Aorta (tissue), 5 donors: ENCODE measurements at regions of chr1 and their contacts with region 1.

Region 1: GRCh38 chr1:156728597-156729462 is at the start of gene ISG20L2:
- DNase-seq: peak; percentile 98
- ATAC-seq: peak; percentile 97
- H3K4me3 ChIP-seq: peak within 1 kb of the TSS; percentile 83 to 89
- H3K27ac ChIP-seq: peak within 1 kb of the TSS; percentile 16 to 94
- H3K4me1 ChIP-seq: peaks cover 0 to 2% of the 10 kb centered on the region in 2 donors
- H3K27me3 ChIP-seq: no peaks in the 10 kb centered on the region
- total RNA-seq, gene ISG20L2: 20.6 to 26.9 TPM

Region 2: DNA sequence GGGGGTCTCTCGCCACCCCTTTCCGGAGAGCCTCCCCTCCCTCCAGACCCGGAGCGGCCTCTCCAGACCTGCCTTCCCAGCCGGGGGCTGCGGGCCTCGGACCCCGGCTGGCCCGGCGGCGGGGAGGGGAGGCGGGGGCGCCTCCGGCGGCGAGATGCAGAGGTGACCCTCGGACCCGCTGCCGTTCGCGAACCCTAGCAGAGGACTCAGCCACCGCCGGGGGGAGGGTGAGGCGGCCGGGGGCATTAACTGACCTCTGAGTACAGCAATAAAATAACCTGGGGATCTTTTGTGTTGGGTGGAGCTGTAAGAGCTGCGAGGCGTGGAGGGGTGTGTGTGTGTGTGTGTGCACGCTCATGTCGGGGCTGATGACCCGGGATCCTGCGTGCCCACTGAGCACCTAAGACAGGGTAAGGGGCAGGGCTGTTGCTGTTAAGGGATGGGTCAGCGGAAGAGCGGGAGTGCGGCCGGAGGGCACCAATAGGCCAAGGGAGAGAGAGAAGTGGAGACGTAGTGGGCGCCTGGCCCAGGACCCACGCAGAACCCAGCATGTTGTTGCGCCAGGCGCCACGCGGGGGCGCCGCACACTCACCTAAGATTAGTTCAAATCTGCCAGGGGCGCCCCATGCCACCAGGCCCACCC is 103.3 kb before region 1 on chr1:
- intact Hi-C with region 1: loop called in 1 of 2 experiments (anchors 2 kb)
- DNase-seq: peak; percentile 65 to 89
- ATAC-seq: peak; percentile 77
- H3K4me3 ChIP-seq: no peak overlapping the region
- H3K27ac ChIP-seq: no peak overlapping the region
- H3K4me1 ChIP-seq: no peaks in the 10 kb centered on the region
- H3K27me3 ChIP-seq: no peaks in the 10 kb centered on the region

Region 3: DNA sequence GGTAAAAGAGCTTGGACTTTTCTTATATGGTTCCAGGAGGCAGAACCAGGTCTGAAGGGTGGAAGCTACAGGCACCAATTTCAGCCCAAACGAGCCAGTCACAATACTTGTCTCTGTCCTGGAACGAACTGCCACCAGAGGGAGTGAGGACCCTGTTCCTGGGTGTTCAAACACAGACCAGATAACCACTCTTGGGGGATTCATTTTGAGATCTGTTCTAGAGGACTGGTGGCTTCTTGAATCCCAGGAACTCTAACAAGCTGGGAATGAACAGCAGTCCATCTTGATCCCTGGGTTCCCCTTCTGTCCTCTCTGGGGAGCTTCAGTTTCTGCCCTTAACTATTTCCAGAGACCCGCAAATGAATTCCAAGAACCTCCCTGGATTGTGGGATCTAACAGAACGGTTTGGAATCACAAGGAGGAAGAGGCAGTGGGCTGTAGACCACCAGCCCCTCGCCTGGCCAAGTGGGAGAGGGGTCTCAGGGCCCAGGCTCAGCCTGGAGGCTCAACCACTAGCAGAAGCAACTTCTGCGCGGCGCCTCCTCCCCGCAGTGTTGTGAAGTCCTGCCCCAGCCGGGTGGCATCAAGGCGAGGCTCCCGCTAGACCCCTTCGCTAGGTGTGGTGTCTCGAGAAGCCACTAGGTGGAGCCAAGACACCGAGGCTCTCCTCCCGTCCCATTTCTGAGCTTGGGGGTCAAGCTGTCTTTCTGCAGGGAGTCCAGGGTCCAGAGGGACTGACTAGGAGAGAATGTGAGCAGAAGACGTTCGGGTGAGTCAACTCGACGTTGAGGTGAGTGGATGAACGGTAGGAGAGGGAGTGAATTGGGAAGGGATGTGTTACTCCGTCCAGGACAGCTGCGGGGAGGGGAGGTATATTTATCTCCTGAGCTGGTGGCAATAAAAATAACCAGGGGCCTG is 39.5 kb before region 1 on chr1:
- intact Hi-C with region 1: loop called (anchors 1 to 2 kb)
- DNase-seq: peak; percentile 86 to 91
- ATAC-seq: peak; percentile 93
- H3K4me3 ChIP-seq: no peak overlapping the region
- H3K27ac ChIP-seq: no peak overlapping the region
- H3K4me1 ChIP-seq: no peaks in the 10 kb centered on the region
- H3K27me3 ChIP-seq: no peaks in the 10 kb centered on the region

Region 4: DNA sequence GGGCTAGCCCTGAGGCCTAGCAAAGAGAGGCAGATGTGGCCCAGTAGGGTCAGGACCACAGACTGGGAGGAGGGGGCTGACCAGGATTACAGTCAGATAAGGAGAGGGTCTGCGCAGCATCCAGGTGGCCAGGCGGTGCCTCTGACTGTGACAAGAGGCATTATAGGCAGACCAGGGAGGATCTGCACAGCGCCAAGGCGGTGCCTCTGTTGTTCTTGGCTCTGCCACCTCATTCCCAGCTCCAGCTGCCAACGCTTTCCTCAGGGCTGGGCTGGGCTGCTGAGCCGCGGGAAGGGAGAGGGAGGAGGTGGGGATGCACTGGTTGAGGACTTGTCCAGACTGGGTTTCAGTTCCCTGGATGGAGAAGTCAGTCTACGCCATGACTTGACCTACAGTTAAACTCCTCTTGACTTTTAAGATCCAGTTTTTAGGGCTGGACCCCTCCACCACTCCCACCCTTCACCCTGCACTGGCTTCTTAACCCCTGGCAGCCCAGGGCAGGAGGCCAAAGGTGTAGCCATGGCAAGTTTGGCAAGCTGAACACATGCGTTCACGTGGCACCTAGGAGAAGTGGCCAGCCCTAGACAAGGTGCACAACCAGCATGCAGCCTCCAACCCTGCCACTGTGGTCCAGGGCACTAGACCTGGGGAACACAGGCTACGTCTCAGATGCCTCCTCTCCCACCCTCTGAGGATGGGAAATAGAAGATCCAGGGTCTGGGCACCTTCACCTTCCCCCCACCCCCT is 18.9 kb before region 1 on chr1:
- intact Hi-C with region 1: loop called in 1 of 2 experiments (anchors 2 kb)
- DNase-seq: peak; percentile 85 to 92
- ATAC-seq: peak; percentile 78
- H3K4me3 ChIP-seq: no peak overlapping the region
- H3K27ac ChIP-seq: no peak overlapping the region
- H3K4me1 ChIP-seq: no peaks in the 10 kb centered on the region
- H3K27me3 ChIP-seq: no peaks in the 10 kb centered on the region

Region 5: DNA sequence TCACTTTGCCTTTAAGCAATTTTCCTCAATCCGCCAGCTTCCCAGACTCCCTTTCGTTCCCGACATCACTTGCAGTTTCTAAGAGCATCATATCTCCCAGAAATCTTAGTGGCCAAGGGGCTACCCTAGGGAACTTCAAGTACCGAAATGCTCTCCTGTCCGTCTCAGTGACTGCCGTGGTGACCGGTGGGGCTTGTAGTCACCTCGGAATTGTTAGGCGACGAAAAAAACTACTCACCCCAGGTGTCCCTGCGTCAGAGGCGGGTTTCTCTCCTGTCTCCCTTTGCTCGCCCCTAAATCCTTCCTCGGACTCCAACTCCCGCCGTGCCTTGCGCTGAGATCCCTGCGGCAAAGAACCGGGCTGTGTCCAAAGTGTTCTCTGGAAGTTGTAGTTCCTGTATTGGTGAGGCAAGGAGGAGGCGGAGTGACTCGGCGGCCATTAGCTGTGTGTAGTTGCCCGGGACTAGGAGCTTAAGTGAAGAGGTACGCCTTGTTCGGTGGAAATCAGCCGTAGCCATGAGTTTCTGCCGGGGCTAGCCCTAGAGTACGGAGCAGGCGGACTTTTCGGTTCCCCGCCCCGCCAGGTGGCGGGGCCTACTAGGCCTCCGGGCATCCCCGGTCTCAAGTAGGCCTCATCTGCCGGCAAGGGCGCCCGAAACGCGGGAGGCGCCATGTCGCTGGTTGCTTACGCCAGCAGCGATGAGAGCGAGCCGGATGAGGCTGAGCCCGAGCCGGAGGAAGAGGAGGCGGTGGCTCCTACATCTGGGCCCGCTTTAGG is 38.5 kb after region 1 on chr1 and contains the start of gene PRCC:
- intact Hi-C with region 1: loop called in 1 of 2 experiments (anchors 5 kb)
- DNase-seq: peak; percentile 98 to 99
- ATAC-seq: peak; percentile 98
- H3K4me3 ChIP-seq: peak within 1 kb of the TSS; percentile 75 to 91
- H3K27ac ChIP-seq: peak within 1 kb of the TSS in 1 of 2 donors; percentile 83
- H3K4me1 ChIP-seq: peaks cover 2 to 3% of the 10 kb centered on the region in 2 donors
- H3K27me3 ChIP-seq: no peaks in the 10 kb centered on the region
- total RNA-seq, gene PRCC: 41.0 to 50.2 TPM

Region 6: GRCh38 chr1:156852418-156852874 is 123.6 kb after region 1 on chr1:
- intact Hi-C with region 1: no loop called
- DNase-seq: no peak
- ATAC-seq: peak; percentile 32
- H3K4me3 ChIP-seq: no peak overlapping the region
- H3K27ac ChIP-seq: no peak overlapping the region
- H3K4me1 ChIP-seq: no peaks in the 10 kb centered on the region
- H3K27me3 ChIP-seq: no peaks in the 10 kb centered on the region

Region 7: DNA sequence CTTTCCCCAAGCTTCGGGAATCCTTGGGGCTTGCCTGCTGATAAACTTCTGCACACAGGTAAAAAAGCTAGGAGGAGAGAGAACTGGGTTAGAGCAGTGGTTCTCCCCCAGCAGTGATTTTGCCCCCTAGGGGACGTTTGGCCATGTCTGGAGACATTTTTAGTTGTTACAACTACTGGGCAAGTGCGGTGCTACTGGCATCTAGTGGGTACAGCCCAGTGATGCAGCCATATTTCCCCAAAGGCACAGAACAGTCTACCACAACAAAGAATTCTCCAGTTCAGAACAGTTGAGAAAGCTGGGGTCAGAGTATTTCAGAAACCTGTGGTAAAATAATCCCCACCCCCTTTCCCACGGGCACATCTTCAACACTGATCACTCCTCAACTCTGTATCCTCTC is 232.9 kb after region 1 on chr1:
- intact Hi-C with region 1: no loop called
- DNase-seq: no peak
- ATAC-seq: no peak
- H3K4me3 ChIP-seq: no peak overlapping the region
- H3K27ac ChIP-seq: no peak overlapping the region
- H3K4me1 ChIP-seq: no peaks in the 10 kb centered on the region
- H3K27me3 ChIP-seq: no peaks in the 10 kb centered on the region